Prostate gland (tissue), 2 donors: ENCODE measurements at regions of chr20 and their contacts with region 1.

Region 1: DNA sequence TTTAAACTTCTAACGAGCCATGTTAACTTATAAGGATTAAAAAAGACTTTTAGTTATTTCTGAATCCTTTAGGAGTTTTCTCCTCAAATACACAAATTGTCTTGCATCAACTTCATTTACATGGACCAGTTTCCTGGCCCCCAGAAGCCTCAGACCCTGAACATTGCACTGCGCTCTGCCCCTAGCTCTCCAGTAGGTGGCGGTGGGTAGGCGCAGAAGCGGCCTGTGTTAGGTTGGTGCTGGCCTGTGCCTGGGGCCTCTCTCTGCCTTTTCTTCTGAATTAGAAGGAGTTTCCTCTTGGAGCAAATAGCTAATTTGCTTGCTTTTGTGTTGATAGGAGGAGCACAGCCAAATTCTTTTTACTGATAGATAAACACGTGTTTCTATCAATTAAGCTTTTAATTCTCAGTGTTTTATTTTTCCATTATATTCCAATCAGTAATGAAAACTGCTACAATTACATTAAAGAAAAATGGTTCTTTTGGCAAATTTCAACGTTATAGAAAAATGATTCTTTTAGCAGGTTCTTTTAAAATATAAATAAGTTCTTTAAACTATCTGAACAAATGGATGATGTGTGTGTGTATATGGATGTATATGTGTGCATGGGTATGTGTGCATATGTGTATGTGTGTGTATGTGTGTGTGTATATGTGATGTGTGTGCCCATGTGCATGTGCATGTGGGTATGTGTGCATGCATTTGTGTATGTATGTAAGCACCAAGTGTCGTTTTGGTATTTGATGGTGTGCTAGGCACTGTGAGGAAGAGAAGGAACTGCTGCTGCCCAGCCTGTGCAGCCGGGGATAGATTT is 44.5 kb downstream of the DTD1 start:
- DNase-seq: peak; percentile 39
- H3K4me3 ChIP-seq: no peak overlapping the region
- H3K27ac ChIP-seq: no peak overlapping the region
- H3K4me1 ChIP-seq: no peaks in the 10 kb centered on the region
- H3K27me3 ChIP-seq: no peaks in the 10 kb centered on the region
- CTCF ChIP-seq: peak; percentile 30 to 78 (median 70)
- POLR2A ChIP-seq: no peak

Region 2: DNA sequence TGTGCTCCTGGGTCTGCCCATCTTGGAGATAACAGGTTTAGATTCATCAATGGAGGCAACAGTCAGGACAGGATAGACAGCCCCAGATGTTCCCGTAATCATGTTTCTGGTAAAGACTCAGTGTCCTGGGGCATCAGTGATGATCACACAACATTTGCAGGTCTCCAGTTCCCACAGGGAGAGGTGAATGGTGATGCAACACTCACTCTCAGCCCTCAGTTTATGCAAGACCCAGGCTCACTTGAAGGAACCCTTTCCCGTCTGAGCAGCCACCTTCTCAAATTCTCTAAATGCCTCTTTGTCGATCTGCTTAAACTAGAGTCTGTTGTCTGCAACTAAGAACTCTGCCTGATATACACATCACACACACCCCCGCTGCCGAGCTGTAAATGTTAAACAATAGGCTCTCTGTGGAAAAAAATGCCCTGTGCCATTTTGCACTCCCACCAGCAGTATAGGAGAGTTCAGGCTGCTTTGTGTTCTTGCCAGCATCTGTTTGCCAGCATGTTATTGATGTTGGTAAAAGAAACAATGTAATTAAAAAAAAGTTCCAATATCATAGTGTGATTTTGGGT is 151.1 kb after region 1 on chr20:
- intact Hi-C with region 1: no loop called
- DNase-seq: no peak
- H3K4me3 ChIP-seq: no peak overlapping the region
- H3K27ac ChIP-seq: no peak overlapping the region
- H3K4me1 ChIP-seq: no peaks in the 10 kb centered on the region
- H3K27me3 ChIP-seq: no peaks in the 10 kb centered on the region
- CTCF ChIP-seq: no peak
- POLR2A ChIP-seq: no peak

Region 3: DNA sequence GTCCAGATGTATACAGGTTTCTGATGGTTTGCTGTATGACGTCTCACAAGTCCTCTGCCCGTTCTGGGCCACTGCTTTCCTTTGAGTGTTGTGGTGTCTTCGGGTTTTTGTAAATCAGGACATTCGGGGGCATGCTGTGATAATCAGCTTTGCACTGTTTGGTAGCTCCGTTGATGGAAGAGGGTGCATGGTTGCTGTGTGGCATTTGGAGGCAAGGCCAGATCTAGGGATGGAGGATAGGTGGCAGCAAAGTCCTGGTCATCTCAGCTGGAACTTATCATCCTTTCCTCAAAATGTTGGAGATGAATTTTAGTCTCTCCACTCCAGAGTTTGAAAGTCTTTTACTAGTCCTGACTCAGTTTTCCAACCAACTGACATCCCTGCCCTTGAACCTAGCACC is 272.2 kb after region 1 on chr20:
- intact Hi-C with region 1: loop called (anchors 5 kb)
- DNase-seq: no peak
- H3K4me3 ChIP-seq: no peak overlapping the region
- H3K27ac ChIP-seq: no peak overlapping the region
- H3K4me1 ChIP-seq: no peaks in the 10 kb centered on the region
- H3K27me3 ChIP-seq: no peaks in the 10 kb centered on the region
- CTCF ChIP-seq: peak in 2 of 4 experiments; percentile 23 to 32
- POLR2A ChIP-seq: no peak

Region 4: DNA sequence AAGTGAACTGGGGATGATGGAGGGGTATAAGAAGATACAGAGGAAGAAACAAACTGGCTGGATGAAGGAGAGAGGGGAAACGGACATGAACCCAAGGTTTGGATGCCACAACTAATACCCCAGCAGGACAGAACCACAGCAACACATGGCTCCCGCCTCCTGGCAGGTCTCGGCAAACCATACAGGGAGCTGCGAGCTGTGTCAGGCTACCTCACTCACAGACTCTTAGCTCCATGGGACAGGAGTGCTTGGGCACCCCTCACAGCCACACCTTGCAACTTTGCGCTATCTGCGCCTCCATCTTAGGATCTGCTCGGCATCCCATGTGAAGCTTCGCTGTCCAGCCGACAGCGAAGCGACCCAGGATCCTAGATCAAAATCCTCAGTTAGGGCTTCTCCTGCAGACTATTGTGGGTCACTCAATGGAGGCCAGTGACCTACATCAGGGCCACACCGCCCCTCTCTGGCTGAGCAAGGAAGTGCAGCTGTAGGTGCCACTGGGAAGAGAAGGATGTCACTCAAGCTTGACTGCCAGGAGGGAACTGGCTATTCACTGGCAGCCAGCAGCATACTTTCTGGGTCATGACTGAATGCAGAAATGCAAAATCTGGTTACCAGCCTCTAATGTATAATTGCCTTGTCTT is 951.3 kb after region 1 on chr20:
- intact Hi-C with region 1: loop called (anchors 10 kb)
- DNase-seq: peak; percentile 61
- H3K4me3 ChIP-seq: no peak overlapping the region
- H3K27ac ChIP-seq: no peak overlapping the region
- H3K4me1 ChIP-seq: no peaks in the 10 kb centered on the region
- H3K27me3 ChIP-seq: no peaks in the 10 kb centered on the region
- CTCF ChIP-seq: peak; percentile 66 to 88 (median 83)
- POLR2A ChIP-seq: no peak